ENCODE measurements at regions of chr15 and their contacts with region 1.

Region 1: DNA sequence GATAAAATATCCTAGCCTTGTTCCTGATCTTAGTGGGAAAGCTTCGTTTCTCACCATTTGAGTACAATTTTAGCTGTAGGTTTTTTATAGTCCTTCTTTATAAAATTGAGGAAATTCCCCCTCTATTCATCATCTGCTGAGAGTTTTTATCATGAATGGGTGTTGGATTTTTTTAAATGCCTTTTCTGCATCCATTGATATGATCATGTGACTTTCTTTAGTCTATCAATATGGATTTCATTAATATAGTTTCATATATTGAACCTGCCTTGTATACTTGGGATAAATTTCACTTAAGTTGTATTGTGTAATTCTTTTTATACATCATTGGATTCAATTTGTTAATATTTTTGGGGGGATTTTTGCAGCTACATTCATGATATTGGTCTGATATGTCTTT is 60.8 kb upstream of the AP4E1 start:
- DNase-seq: no peak
- H3K4me3 ChIP-seq: no peak overlapping the region
- H3K27ac ChIP-seq: no peak overlapping the region
- H3K4me1 ChIP-seq: no peaks in the 10 kb centered on the region
- H3K27me3 ChIP-seq: no peaks in the 10 kb centered on the region
- CTCF ChIP-seq: no peak
- POLR2A ChIP-seq: no peak

Region 2: GRCh38 chr15:50862553-50862952 is 14.9 kb after region 1 on chr15:
- intact Hi-C with region 1: loop called (anchors 2 kb)
- DNase-seq: no peak
- H3K4me3 ChIP-seq: no peak overlapping the region
- H3K27ac ChIP-seq: no peak overlapping the region
- H3K4me1 ChIP-seq: no peaks in the 10 kb centered on the region
- H3K27me3 ChIP-seq: no peaks in the 10 kb centered on the region
- CTCF ChIP-seq: no peak
- POLR2A ChIP-seq: no peak

Region 3: GRCh38 chr15:51121118-51121517 is 273.4 kb after region 1 on chr15:
- intact Hi-C with region 1: no loop called
- DNase-seq: no peak
- H3K4me3 ChIP-seq: no peak overlapping the region
- H3K27ac ChIP-seq: no peak overlapping the region
- H3K4me1 ChIP-seq: no peaks in the 10 kb centered on the region
- H3K27me3 ChIP-seq: no peaks in the 10 kb centered on the region
- CTCF ChIP-seq: no peak
- POLR2A ChIP-seq: no peak

Region 4: DNA sequence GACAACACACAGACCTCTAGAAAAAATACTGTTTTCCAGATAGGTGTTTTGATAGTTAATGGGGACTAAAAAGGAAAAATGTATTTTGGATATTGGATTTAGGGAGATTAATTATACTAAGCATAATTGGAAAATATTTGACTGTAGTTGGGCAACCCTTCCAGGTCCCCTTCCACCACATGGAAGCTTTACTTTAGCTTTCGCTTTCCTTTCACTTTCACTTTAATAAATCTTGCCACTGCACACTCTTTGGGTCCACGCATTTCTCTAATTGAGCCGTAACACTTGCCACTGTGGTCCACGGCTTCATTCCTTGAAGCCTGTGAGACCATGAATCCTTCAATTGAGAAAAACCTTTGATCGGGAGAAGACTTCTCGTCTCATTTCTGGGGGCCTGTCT is 509.3 kb after region 1 on chr15:
- intact Hi-C with region 1: no loop called
- DNase-seq: no peak
- H3K4me3 ChIP-seq: no peak overlapping the region
- H3K27ac ChIP-seq: no peak overlapping the region
- H3K4me1 ChIP-seq: no peaks in the 10 kb centered on the region
- H3K27me3 ChIP-seq: no peaks in the 10 kb centered on the region
- CTCF ChIP-seq: no peak
- POLR2A ChIP-seq: no peak